Activated T-helper 1 cell treated with anti-CD3 and anti-CD28 coated beads, Interleukin-12 subunit alpha, Interleukin-12 subunit beta, Interleukin-2, Interleukin-4 antibody, amounts not matched to agents 30 ng/mL and 10 ng/mL and 1 ng/mL, durations not matched to agents 14 hours and 24 hours and 36 hours (primary cell): ENCODE measurements at regions of chr2 and their contacts with region 1.

Region 1: DNA sequence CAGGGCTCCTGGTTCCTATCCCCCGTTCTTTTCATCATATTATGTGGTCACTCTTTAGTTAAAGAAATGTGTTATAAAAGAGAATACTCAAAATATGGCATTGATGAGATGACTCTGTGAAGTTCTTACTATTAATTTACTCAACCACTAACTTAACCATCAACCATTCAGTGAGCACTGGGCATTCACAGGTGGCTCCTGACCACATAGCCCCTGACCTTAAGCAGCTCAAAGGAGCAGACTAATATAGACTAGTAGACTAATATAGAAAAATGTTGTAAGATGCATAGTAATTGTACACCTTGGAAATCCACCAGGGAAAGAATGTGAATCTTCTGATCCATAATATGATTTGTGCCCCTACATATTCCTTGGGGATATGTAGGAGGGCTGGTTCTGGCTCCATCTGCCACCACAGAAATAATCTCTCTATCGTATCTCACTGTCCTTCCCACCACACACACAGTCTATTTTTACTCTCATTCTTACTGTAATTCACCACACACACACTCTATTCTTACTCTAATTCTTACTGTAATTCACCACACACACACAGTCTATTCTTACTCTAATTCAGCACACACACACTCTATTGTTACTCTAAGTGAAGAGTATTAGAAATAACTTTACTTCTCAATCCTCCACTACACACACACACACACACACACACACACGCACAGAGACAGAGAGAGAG is 188.9 kb upstream of the ITGA4 start:
- DNase-seq: no peak
- H3K4me3 Mint-ChIP-seq: no peak overlapping the region
- H3K27ac Mint-ChIP-seq: peak overlapping the region; percentile 30
- H3K4me1 Mint-ChIP-seq: peaks cover 15% of the 10 kb centered on the region
- H3K27me3 Mint-ChIP-seq: no peaks in the 10 kb centered on the region

Region 2: DNA sequence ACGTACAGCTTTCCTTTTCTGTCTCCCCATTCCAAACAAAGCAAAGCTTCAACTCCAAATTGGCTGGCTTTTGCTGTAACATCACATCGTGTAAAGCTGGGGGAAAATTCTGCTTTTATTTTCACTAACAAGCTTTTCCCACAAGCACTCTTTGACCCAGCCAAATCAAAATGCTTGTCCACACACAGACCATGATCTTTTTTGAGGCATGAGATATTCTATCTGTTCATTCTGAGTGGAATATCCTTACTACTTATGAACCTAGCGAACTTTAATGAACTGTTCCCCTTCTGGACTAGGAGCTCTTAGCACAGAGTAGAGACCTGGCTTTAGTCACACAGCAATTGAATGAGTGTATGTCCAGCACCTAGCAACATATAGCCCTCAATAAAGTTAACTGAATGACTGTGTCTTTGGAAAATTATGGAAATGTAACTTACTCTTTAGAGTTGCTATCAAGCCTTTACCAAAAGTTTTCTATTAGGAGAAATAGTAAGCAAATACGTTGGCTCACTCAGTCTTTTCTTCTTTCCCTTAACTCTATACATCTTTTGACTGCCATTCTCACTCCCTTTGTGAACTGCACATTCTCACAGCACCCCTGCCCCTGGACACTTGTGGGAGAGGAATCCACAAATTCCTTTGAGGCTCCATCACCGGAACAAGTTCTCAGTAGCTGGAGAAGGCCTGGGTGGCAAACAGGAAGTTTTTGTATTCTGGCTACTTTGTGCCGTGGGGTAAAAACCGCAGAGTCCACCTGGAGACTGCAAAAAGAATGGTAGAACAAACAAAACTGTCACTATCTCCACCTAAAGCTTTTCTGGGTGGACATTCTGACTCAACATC is 289.2 kb before region 1 on chr2:
- intact Hi-C with region 1: no loop called
- DNase-seq: no peak
- H3K4me3 Mint-ChIP-seq: peak overlapping the region; percentile 72
- H3K27ac Mint-ChIP-seq: peak overlapping the region; percentile 52
- H3K4me1 Mint-ChIP-seq: peaks cover 37% of the 10 kb centered on the region
- H3K27me3 Mint-ChIP-seq: peaks cover 37% of the 10 kb centered on the region

Region 3: GRCh38 chr2:181231886-181232621 is 36.3 kb before region 1 on chr2:
- intact Hi-C with region 1: loop called (anchors 5 kb)
- DNase-seq: no peak
- H3K4me3 Mint-ChIP-seq: no peak overlapping the region
- H3K27ac Mint-ChIP-seq: no peak overlapping the region
- H3K4me1 Mint-ChIP-seq: no peaks in the 10 kb centered on the region
- H3K27me3 Mint-ChIP-seq: no peaks in the 10 kb centered on the region

Region 4: GRCh38 chr2:181252262-181253148 is 15.8 kb before region 1 on chr2:
- intact Hi-C with region 1: no loop called
- DNase-seq: no peak
- H3K4me3 Mint-ChIP-seq: no peak overlapping the region
- H3K27ac Mint-ChIP-seq: no peak overlapping the region
- H3K4me1 Mint-ChIP-seq: peaks cover 22% of the 10 kb centered on the region
- H3K27me3 Mint-ChIP-seq: no peaks in the 10 kb centered on the region